CD8-positive, alpha-beta T cell (primary cell): ENCODE measurements at regions of chr17 and their contacts with region 1.

Region 1: GRCh38 chr17:81094509-81095382 is 59.8 kb downstream of the BAIAP2 start:
- DNase-seq: peak; percentile 78 to 98 (median 92)
- ATAC-seq: peak; percentile 85
- H3K4me3 ChIP-seq: peak overlapping the region; percentile 17 to 28
- H3K4me3 Mint-ChIP-seq: peak overlapping the region; percentile 71
- H3K27ac ChIP-seq: peak overlapping the region; percentile 47 to 72
- H3K27ac Mint-ChIP-seq: peak overlapping the region; percentile 85
- H3K4me1 ChIP-seq: peaks cover 54% of the 10 kb centered on the region
- H3K4me1 Mint-ChIP-seq: peaks cover 48% of the 10 kb centered on the region
- H3K27me3 ChIP-seq: no peaks in the 10 kb centered on the region
- H3K27me3 Mint-ChIP-seq: no peaks in the 10 kb centered on the region
- CTCF ChIP-seq: no peak

Region 2: DNA sequence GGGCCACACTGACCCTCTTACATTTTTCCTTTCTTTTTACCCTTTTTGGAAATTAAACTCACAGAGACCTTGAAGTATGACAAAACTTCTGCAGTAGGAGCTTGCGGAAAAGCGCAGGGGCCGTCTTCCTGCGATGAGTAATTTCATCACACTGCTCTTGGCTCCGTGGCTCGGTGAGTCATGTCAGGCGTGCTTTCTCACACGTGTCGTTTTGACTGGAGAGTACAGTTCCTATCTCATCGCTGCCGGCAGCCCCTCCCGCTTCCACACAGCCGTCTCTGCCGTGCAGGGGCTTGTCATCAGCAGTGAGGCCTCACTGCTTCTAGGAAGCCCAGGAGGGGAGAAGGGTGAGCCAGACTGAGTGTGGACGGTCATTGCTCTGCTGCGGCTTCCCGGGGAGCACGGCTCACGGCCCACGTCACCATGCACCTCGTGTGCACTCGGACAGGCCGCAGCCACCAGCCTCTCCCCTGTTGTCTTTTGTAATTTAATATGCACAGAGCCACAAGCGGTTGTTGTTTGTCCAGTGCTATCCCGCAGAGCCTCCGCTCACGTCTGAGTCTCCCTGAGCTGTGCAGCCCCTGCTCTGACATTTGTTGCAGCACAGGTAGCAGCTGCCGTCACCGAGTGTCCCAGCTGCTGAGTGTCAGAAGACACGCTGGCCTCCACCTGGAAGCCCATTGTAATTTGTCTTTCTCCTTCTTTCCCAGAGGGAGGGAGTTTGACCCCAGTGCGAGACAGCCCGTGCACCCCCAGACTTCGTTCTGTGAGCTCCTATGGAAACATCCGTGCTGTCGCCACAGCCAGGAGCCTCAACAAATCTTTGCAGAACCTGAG is 202.5 kb before region 1 on chr17:
- CTCF ChIA-PET with region 1: no interaction called
- POLR2A ChIA-PET with region 1: no interaction called
- intact Hi-C with region 1: loop called in 1 of 2 experiments (anchors 1 kb)
- DNase-seq: peak; percentile 55 to 94 (median 74)
- ATAC-seq: peak; percentile 83
- H3K4me3 ChIP-seq: peak overlapping the region in 1 of 2 experiments; percentile 21
- H3K4me3 Mint-ChIP-seq: peak overlapping the region; percentile 68
- H3K27ac ChIP-seq: peak overlapping the region; percentile 47 to 89
- H3K27ac Mint-ChIP-seq: peak overlapping the region; percentile 96
- H3K4me1 ChIP-seq: peaks cover 32% of the 10 kb centered on the region
- H3K4me1 Mint-ChIP-seq: peaks cover 41% of the 10 kb centered on the region
- H3K27me3 ChIP-seq: no peaks in the 10 kb centered on the region
- H3K27me3 Mint-ChIP-seq: no peaks in the 10 kb centered on the region
- CTCF ChIP-seq: no peak

Region 3: GRCh38 chr17:80991645-80992076 is 103.1 kb before region 1 on chr17 and contains the start of gene CHMP6:
- CTCF ChIA-PET with region 1: interaction called, 10 read pairs
- POLR2A ChIA-PET with region 1: interaction called, 4 read pairs
- intact Hi-C with region 1: loop called in 1 of 2 experiments (anchors 1 kb)
- DNase-seq: peak; percentile 48 to 86 (median 70)
- ATAC-seq: peak; percentile 69
- H3K4me3 ChIP-seq: peak within 1 kb of the TSS; percentile 74 to 84
- H3K4me3 Mint-ChIP-seq: peak within 1 kb of the TSS; percentile 81
- H3K27ac ChIP-seq: peak within 1 kb of the TSS; percentile 59 to 84
- H3K27ac Mint-ChIP-seq: peak within 1 kb of the TSS; percentile 84
- H3K4me1 ChIP-seq: peaks cover 32% of the 10 kb centered on the region
- H3K4me1 Mint-ChIP-seq: peaks cover 20% of the 10 kb centered on the region
- H3K27me3 ChIP-seq: no peaks in the 10 kb centered on the region
- H3K27me3 Mint-ChIP-seq: no peaks in the 10 kb centered on the region
- CTCF ChIP-seq: no peak
- total RNA-seq, gene CHMP6: 10.6 to 11.5 TPM

Region 4: GRCh38 chr17:81018044-81018802 is 76.5 kb before region 1 on chr17:
- CTCF ChIA-PET with region 1: interaction called, 18 read pairs
- POLR2A ChIA-PET with region 1: interaction called, 5 read pairs
- intact Hi-C with region 1: no loop called
- DNase-seq: peak in 7 of 9 experiments; percentile 23 to 74 (median 50)
- ATAC-seq: peak; percentile 79
- H3K4me3 ChIP-seq: peak overlapping the region; percentile 56 to 62
- H3K4me3 Mint-ChIP-seq: peak overlapping the region; percentile 78
- H3K27ac ChIP-seq: peak overlapping the region; percentile 53 to 87
- H3K27ac Mint-ChIP-seq: peak overlapping the region; percentile 94
- H3K4me1 ChIP-seq: peaks cover 24% of the 10 kb centered on the region
- H3K4me1 Mint-ChIP-seq: peaks cover 32% of the 10 kb centered on the region
- H3K27me3 ChIP-seq: no peaks in the 10 kb centered on the region
- H3K27me3 Mint-ChIP-seq: no peaks in the 10 kb centered on the region
- CTCF ChIP-seq: no peak

Region 5: DNA sequence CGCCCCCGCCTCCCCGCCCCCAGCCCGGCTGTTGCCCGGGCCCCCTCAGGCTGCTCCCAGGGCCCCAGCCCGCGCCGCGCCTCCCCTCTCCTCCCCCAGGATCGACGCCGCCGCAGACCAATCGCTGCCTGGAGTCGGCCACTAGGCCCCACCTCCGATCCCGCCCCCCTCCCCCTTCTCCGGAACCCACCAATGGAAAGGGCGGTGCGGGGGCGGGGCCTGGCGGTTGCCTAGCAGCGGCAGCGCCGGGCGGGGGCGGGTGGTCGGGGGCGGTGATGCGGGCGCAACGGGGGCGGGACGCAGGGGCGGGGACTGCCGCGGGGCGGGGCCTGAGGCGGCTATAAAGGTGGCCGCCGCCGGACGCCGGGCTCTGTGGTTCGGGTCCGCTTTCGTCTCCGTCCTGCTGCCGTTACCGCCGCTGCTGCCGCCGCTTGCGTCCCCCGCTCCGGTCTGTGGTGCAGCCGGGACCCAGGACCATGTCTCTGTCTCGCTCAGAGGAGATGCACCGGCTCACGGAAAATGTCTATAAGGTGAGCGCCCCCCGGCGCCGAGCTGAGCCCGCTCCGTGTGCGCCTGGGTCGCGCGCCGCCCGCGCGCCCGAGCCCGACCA is 59.9 kb before region 1 on chr17 and contains the start of gene BAIAP2:
- CTCF ChIA-PET with region 1: no interaction called
- POLR2A ChIA-PET with region 1: no interaction called
- intact Hi-C with region 1: loop called (anchors 1 kb)
- DNase-seq: peak; percentile 96 to 100 (median 98)
- ATAC-seq: peak; percentile 86
- H3K4me3 ChIP-seq: peak within 1 kb of the TSS; percentile 53 to 60
- H3K4me3 Mint-ChIP-seq: peak within 1 kb of the TSS; percentile 95
- H3K27ac ChIP-seq: peak within 1 kb of the TSS in 1 of 2 experiments; percentile 40
- H3K27ac Mint-ChIP-seq: peak within 1 kb of the TSS; percentile 93
- H3K4me1 ChIP-seq: peaks cover 11% of the 10 kb centered on the region
- H3K4me1 Mint-ChIP-seq: peaks cover 25% of the 10 kb centered on the region
- H3K27me3 ChIP-seq: no peaks in the 10 kb centered on the region
- H3K27me3 Mint-ChIP-seq: no peaks in the 10 kb centered on the region
- CTCF ChIP-seq: no peak
- total RNA-seq, gene BAIAP2: 8.5 to 9.1 TPM

Region 6: DNA sequence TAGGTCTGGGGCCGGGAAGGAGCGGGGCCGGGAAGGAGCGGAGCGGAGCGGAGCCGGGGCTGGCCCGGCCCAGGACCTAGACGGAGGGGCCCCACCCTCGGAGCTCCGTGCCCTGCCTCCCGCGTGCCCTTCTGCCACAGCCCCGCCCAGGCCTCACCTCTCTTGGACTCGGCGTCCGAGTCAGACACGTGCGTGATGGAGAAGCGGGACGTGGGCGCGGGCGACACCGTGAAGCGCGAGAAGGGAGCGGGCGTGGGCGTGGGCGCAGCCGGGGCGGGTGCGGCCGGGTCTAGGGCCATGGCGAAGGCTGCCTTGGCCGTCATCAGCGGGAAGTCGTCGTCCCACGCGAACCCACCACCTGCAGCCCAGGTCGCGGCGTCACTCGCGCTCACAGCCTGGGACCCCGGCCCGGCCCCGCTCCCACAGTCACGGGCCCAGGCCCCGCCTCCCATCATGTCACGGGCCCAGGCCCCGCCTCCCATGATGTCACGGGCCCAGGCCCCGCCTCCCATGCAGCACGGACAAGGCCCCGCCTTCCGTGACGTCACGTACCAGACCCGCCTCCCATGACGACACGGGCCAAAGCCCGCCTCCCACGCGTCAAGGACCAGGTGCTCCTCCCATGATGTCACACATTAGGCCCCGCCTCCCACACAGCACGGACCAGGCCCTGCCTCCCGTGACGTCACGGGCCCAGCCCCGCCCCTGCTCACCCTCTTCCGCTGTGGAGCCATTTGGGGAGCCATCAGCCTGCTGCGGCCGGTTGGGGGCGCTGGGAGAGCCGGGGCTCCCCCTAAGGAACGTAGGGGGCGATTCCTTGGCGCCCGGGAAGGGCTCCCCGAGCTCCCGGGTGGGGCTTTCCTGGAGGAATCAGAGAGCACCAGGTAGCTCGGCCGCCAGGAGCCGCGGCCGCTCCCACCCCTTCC is 24.7 kb after region 1 on chr17:
- CTCF ChIA-PET with region 1: no interaction called
- POLR2A ChIA-PET with region 1: interaction called, 5 read pairs
- intact Hi-C with region 1: loop called in 1 of 2 experiments (anchors 2 kb)
- DNase-seq: peak; percentile 18 to 94 (median 73)
- ATAC-seq: peak; percentile 87
- H3K4me3 ChIP-seq: peak overlapping the region; percentile 8 to 23
- H3K4me3 Mint-ChIP-seq: peak overlapping the region; percentile 73
- H3K27ac ChIP-seq: no peak overlapping the region
- H3K27ac Mint-ChIP-seq: peak overlapping the region; percentile 91
- H3K4me1 ChIP-seq: peaks cover 6% of the 10 kb centered on the region
- H3K4me1 Mint-ChIP-seq: peaks cover 6% of the 10 kb centered on the region
- H3K27me3 ChIP-seq: no peaks in the 10 kb centered on the region
- H3K27me3 Mint-ChIP-seq: peaks cover 4% of the 10 kb centered on the region
- CTCF ChIP-seq: no peak

Region 7: DNA sequence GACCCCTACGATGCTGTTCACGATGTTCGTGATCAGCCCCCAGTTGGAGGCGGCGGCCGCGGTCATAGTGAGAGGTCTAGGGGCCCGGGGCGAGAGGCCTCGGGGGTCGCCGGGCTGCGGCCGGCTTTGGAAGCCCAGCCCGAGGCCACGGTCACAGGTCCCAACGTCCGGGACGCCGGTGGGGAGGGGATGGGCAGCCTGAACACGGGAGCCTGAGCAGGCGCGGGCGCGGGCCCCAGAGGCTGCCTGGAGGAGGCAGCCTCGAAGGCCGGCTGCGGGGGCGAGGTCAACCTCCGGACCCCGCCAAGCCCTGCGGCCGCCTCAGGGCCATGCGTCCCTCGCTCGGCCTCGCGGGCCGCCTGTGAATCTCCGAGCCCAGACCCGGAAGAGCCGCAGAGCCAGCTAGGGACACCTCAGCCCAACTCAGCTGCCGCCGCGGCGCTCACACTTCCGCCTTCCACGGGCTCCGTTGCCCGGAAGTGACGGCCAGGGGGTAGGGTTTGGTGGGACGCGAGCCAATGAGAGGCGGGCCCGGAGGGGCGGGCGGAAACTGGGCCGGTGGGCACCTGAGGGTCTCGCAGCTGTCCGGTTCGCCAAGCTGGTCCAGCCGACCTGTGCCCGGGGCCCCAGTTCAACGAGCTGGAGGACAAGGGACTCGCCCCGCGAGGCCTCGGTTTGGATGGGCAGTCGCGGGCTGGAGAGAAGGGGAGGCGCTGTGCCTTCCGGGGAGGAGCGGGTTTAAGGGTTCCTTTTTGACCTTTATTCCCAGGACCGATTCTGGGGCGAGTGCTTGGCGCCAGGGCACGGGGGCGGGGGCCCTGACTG is 200.3 kb after region 1 on chr17 and contains the start of gene SLC38A10:
- CTCF ChIA-PET with region 1: no interaction called
- POLR2A ChIA-PET with region 1: no interaction called
- intact Hi-C with region 1: no loop called
- DNase-seq: peak; percentile 78 to 94 (median 91)
- ATAC-seq: peak; percentile 83
- H3K4me3 ChIP-seq: peak within 1 kb of the TSS; percentile 77 to 98
- H3K4me3 Mint-ChIP-seq: peak within 1 kb of the TSS; percentile 94
- H3K27ac ChIP-seq: peak within 1 kb of the TSS; percentile 85 to 90
- H3K27ac Mint-ChIP-seq: peak within 1 kb of the TSS; percentile 96
- H3K4me1 ChIP-seq: peaks cover 24% of the 10 kb centered on the region
- H3K4me1 Mint-ChIP-seq: peaks cover 42% of the 10 kb centered on the region
- H3K27me3 ChIP-seq: no peaks in the 10 kb centered on the region
- H3K27me3 Mint-ChIP-seq: no peaks in the 10 kb centered on the region
- CTCF ChIP-seq: no peak
- total RNA-seq, gene SLC38A10: 16.1 to 17.4 TPM